OCI-LY7 (cell line): ENCODE measurements at regions of chr3 and their contacts with region 1.

Region 1: GRCh38 chr3:58177747-58178527 is 32.8 kb downstream of the DNASE1L3 start:
- DNase-seq: peak; percentile 85
- H3K4me3 ChIP-seq: peak overlapping the region; percentile 53
- H3K27ac ChIP-seq: no peak overlapping the region
- H3K4me1 ChIP-seq: peaks cover 15% of the 10 kb centered on the region
- CTCF ChIP-seq: peak; percentile 88

Region 2: DNA sequence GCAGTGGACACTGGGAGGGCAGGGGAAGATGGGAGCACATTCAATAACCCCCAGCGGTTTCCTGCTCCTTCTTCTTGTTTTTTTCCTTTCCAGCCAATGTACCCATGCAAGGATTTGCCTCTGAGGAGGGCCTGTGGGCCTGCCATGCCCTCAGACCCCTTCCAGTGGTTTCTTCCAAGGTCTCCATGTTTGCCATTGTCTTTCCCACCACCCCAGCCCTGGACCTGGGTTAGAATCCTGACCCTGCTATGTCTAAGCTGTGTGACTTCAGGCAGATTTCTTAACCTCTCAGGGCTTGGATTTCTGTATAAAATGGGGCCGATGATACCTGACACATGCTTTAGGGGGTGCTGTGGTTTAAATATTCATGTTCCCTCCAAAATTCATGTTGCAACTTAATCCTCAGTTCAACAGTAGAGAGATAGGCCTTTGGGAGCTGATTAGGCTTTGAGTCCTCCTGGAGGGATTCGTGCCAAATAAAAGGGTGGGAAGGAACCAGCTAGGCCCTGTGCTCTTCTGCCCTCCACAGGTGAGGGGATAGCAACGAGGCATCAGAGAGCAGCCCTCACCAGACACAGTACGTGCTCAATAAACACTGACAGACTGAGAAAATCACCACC is 216.0 kb before region 1 on chr3:
- CTCF ChIA-PET with region 1: no interaction called
- POLR2A ChIA-PET with region 1: no interaction called
- intact Hi-C with region 1: loop called (anchors 1 kb)
- DNase-seq: peak; percentile 53
- H3K4me3 ChIP-seq: no peak overlapping the region
- H3K27ac ChIP-seq: no peak overlapping the region
- H3K4me1 ChIP-seq: peaks cover 14% of the 10 kb centered on the region
- CTCF ChIP-seq: peak; percentile 79

Region 3: DNA sequence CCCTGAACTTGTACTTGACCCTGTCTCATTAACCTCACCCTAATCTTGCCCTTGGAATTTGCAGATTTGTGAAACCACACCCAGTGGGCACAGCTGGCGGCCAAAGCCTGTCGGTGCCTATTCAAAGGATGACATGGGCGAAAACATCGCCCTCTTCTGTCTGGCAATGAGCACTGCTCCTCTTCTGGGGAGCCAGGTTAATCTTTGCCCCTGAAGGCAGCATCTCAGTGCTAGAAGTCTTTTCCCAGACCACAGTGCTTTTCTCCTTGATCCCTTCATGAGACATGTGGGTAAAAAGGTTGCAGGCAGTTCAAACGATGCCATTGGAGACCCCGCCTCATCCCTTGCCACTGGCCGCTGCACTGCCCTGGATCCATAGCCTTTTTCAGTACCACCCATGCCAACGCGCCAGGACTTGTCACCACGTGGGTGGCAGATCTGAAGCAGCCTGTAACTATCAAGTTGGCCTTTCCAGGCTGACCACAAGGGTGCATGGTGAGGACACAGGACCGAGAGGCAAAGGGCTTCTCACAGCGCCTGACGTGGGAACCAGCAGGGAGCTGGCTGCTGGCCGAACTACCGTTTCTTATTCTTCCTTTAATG is 39.4 kb after region 1 on chr3:
- CTCF ChIA-PET with region 1: interaction called, 5 read pairs
- POLR2A ChIA-PET with region 1: interaction called, 6 read pairs
- intact Hi-C with region 1: loop called (anchors 5 kb)
- DNase-seq: peak; percentile 84
- H3K4me3 ChIP-seq: peak overlapping the region; percentile 24
- H3K27ac ChIP-seq: no peak overlapping the region
- H3K4me1 ChIP-seq: peaks cover 22% of the 10 kb centered on the region
- CTCF ChIP-seq: peak; percentile 92

Region 4: DNA sequence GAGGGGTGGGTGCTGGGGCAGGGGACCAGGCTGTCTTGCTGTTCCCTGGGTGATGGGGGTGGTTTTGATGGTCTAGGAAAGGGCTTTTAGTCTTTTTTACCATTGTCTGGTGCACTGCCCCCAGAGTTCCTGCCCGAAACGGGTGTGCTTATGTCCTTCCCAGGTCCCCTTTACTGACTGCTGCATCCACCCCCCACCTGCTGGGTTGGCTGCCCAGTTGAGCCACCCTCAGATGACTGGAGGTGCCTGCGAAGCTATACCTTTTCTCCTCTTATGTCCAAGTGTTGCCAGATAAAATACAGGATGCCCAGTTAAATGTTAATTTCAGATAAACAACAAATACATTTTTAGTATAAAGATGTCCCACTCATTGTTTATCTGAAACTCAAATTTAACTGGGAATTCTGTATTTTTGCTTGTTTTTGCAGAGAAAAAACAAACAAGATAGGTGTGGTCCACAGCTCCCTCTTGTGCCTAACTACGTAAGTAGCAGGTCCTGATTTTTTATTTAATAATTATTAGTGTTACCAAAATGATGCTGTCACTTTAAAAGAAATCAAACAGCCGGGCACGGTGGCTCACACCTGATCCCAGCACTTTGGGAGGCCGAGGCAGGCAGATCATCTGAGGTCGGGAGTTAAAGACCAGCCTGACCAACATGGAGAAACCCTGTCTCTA is 122.0 kb after region 1 on chr3:
- CTCF ChIA-PET with region 1: no interaction called
- POLR2A ChIA-PET with region 1: no interaction called
- intact Hi-C with region 1: loop called (anchors 1 kb)
- DNase-seq: peak; percentile 45
- H3K4me3 ChIP-seq: no peak overlapping the region
- H3K27ac ChIP-seq: no peak overlapping the region
- H3K4me1 ChIP-seq: no peaks in the 10 kb centered on the region
- CTCF ChIP-seq: peak; percentile 87

Region 5: DNA sequence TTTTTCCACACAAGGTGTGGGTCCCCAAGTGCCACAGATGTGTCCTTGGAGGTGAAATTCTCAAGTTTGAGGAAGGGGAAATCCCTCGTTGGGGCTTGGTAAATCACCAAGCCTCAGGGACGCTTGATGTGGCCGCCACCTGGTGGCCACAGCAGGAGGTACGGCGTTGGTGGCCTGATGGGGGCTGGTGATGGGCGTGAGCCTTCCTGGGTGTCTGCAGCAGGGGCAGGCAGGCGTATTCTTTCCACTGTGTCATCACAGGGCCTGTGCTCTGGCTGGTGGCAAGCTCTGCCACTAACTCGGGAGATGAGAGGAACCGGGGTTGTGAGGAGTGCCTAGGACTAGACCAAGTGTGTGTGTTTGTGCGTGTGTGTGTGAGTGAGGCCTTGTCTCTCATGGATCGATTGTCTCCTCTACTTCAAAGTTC is 354.9 kb after region 1 on chr3:
- CTCF ChIA-PET with region 1: no interaction called
- POLR2A ChIA-PET with region 1: no interaction called
- intact Hi-C with region 1: loop called (anchors 5 kb)
- DNase-seq: peak; percentile 89
- H3K4me3 ChIP-seq: no peak overlapping the region
- H3K27ac ChIP-seq: no peak overlapping the region
- H3K4me1 ChIP-seq: peaks cover 9% of the 10 kb centered on the region
- CTCF ChIP-seq: peak; percentile 94